ENCODE measurements at regions of chr4 and their contacts with region 1.

Region 1: DNA sequence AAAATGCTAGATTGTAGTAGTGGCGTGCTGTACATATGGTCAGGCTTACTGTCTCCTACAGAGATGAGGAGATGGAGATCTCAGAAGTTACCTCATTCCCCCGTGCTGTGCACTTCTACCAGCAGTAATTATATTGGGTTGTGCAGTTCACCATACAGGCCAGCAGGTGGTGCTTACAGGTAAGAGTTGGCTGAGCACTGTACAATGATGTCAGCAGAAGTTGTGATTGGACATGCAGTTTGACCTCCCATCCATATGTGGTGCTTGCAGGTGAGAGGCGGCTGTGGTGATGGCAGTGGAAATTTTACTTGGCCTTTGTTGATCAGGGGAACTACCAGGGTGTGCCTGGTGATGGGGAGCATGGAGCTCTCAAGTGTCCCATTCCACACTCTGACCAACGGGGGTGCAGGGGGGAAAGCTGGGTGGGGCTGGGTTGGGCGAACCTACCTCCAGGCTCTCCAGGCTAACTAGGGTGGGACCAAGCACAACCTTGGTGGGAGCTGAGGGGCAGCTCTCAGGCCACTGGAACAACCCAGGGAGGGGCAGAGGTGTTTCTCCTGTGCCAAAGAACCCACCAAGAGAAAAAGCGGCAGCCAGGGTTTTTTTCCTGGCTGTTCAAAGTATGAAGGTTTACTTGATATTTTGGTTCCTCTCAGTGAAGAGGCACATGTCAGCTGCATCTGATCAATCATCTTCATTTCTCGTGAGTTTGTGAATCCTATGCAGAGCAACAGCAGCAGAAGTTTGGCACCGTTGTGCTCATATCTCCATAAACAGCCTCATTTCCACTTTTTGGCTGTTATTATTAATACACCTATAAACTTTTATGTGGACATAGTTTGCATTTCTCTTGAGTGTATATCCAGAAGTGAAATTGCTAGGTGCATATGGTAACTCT is 73.8 kb upstream of the FREM3 start:
- DNase-seq: peak; percentile 79
- H3K4me3 Mint-ChIP-seq: no peak overlapping the region
- H3K27ac Mint-ChIP-seq: no peak overlapping the region
- H3K4me1 Mint-ChIP-seq: no peaks in the 10 kb centered on the region
- H3K27me3 Mint-ChIP-seq: peaks cover 4% of the 10 kb centered on the region

Region 2: GRCh38 chr4:143762511-143762910 is 11.7 kb before region 1 on chr4:
- intact Hi-C with region 1: no loop called
- DNase-seq: no peak
- H3K4me3 Mint-ChIP-seq: no peak overlapping the region
- H3K27ac Mint-ChIP-seq: no peak overlapping the region
- H3K4me1 Mint-ChIP-seq: no peaks in the 10 kb centered on the region
- H3K27me3 Mint-ChIP-seq: no peaks in the 10 kb centered on the region

Region 3: GRCh38 chr4:143882892-143883291 is 108.6 kb after region 1 on chr4:
- intact Hi-C with region 1: no loop called
- DNase-seq: no peak
- H3K4me3 Mint-ChIP-seq: no peak overlapping the region
- H3K27ac Mint-ChIP-seq: no peak overlapping the region
- H3K4me1 Mint-ChIP-seq: no peaks in the 10 kb centered on the region
- H3K27me3 Mint-ChIP-seq: no peaks in the 10 kb centered on the region

Region 4: DNA sequence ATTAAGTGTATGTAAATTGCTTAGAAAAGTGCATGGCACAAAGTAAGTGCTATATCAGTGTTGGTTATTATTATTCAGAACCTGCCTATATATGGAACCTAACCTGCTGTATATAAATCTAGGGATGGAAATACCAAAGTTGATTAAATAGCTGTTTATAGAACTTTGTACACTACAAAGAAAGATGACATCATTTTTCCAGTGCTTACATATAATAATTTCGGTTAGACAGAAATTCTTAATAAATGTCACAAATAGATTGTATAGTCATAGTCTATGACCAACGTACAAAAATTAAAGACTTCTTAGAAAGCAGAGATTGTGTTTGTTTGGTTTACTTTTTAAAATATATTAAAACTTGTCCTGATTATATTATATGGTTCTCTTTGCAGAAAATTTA is 240.6 kb after region 1 on chr4:
- intact Hi-C with region 1: loop called (anchors 10 kb)
- DNase-seq: no peak
- H3K4me3 Mint-ChIP-seq: no peak overlapping the region
- H3K27ac Mint-ChIP-seq: no peak overlapping the region
- H3K4me1 Mint-ChIP-seq: no peaks in the 10 kb centered on the region
- H3K27me3 Mint-ChIP-seq: peaks cover 3% of the 10 kb centered on the region